ENCODE measurements at regions of chr11 and their contacts with region 1.

Region 1: DNA sequence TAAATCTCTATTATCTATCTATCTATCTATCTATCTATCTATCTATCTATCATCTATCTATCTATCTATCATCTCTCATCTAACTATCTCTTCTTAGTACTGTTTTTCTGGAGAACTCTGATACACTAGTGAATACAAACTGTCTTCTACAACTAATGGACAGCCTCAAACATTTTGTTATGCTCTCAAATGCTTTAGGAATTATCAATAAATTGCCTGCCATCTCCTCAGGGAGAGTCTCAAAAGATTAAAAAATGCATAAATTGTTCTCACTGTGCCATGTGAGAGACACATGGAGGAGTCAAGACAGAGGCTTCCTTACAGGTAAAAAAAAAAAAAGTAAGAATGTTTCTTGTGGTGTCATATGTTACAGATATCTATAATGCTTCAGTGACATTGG is at the start of gene OR8K3:
- DNase-seq: no peak
- ATAC-seq: no peak
- H3K4me3 ChIP-seq: no peak within 1 kb of the TSS
- H3K4me3 Mint-ChIP-seq: no peak within 1 kb of the TSS
- H3K27ac ChIP-seq: no peak within 1 kb of the TSS
- H3K27ac Mint-ChIP-seq: no peak within 1 kb of the TSS
- H3K4me1 ChIP-seq: no peaks in the 10 kb centered on the region
- H3K4me1 Mint-ChIP-seq: no peaks in the 10 kb centered on the region
- H3K27me3 ChIP-seq: no peaks in the 10 kb centered on the region
- H3K27me3 Mint-ChIP-seq: no peaks in the 10 kb centered on the region
- CTCF ChIP-seq: no peak
- total RNA-seq, gene OR8K3: not detected in 2 replicates

Region 2: DNA sequence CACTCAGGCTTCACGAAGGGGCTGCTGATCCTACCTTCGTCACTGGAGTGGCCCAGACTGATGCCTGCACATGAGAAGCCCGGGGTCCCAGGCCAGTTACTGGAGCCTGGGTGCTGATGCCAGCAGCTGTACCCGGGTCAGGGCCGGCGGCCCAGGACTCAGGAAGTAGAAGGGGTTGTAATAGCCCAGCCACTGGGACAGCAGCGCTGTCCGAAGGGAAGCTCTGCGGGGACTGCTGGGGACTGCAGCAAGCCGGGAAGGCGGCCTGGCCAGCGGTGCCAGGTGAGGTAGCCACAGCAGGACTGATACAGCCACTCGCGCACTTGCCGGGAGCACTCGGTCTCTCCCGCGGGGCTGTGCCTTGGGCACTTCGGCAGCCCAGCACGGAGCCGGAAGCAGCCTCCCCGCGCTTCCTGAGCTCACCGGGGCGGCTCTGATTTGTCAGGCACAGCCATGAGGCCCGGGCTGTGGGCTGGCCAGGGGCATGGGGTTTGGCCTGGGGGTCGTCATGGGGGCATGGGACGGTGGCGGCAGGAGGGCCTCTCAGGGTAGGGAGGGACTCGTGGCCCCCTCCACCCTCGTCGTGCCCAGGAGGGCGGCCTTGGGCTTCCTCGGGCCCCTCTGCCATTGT is 17.1 kb after region 1 on chr11:
- CTCF ChIA-PET with region 1: no interaction called
- POLR2A ChIA-PET with region 1: no interaction called
- intact Hi-C with region 1: no loop called
- DNase-seq: no peak
- ATAC-seq: no peak
- H3K4me3 ChIP-seq: no peak overlapping the region
- H3K4me3 Mint-ChIP-seq: no peak overlapping the region
- H3K27ac ChIP-seq: no peak overlapping the region
- H3K27ac Mint-ChIP-seq: no peak overlapping the region
- H3K4me1 ChIP-seq: no peaks in the 10 kb centered on the region
- H3K4me1 Mint-ChIP-seq: no peaks in the 10 kb centered on the region
- H3K27me3 ChIP-seq: no peaks in the 10 kb centered on the region
- H3K27me3 Mint-ChIP-seq: no peaks in the 10 kb centered on the region
- CTCF ChIP-seq: no peak

Region 3: GRCh38 chr11:56375324-56375723 is 60.5 kb after region 1 on chr11 and contains the start of gene OR8U1:
- CTCF ChIA-PET with region 1: no interaction called
- POLR2A ChIA-PET with region 1: no interaction called
- intact Hi-C with region 1: loop called (anchors 10 kb)
- DNase-seq: no peak
- ATAC-seq: no peak
- H3K4me3 ChIP-seq: no peak within 1 kb of the TSS
- H3K4me3 Mint-ChIP-seq: no peak within 1 kb of the TSS
- H3K27ac ChIP-seq: no peak within 1 kb of the TSS
- H3K27ac Mint-ChIP-seq: no peak within 1 kb of the TSS
- H3K4me1 ChIP-seq: no peaks in the 10 kb centered on the region
- H3K4me1 Mint-ChIP-seq: no peaks in the 10 kb centered on the region
- H3K27me3 ChIP-seq: no peaks in the 10 kb centered on the region
- H3K27me3 Mint-ChIP-seq: no peaks in the 10 kb centered on the region
- CTCF ChIP-seq: no peak
- total RNA-seq, gene OR8U1: not detected in 2 replicates

Measured in B cell (primary cell).